Gastrocnemius medialis (tissue), 4 donors: ENCODE measurements at regions of chr11 and their contacts with region 1.

Region 1: GRCh38 chr11:68257475-68258362 is 14.1 kb downstream of the C11orf24 start:
- DNase-seq: peak; percentile 88 to 93
- ATAC-seq: peak; percentile 82 to 86
- H3K4me3 ChIP-seq: peak overlapping the region in 3 of 4 donors; percentile 8 to 41 (median 15)
- H3K27ac ChIP-seq: no peak overlapping the region
- H3K4me1 ChIP-seq: peaks cover 4 to 9% of the 10 kb centered on the region in 2 donors
- H3K27me3 ChIP-seq: no peaks in the 10 kb centered on the region
- CTCF ChIP-seq: peak; percentile 84 to 93 (median 91)
- POLR2A ChIP-seq: no peak

Region 2: DNA sequence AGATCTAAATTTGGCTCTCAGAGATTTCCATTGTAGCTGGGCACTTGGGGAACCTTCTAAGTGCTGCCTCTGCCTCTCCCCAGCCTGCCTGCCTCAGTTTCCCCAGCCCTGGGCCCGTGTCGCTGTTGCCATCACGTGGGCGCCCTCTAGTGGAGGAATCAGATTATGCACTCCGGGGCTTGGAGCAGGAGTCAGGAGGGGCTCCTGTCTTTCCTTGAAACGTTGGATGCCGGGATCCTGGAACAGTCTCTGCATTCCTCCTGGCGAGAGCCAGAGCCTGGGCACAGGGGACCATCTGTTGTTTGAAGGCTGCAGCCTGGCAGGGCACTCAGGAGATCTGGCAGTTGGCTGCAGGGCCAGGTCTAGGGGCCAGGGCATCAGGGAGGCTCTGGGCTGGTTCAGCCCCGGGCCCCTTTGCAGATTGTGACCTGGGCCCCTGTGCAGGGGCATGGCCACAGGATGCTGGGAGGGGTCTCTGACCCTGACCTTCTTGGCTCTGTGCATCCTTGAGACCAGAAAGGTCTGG is 126.3 kb after region 1 on chr11:
- in situ Hi-C with region 1: loop called in 1 of 4 experiments (anchors 5 kb)
- intact Hi-C with region 1: loop called (anchors 5 kb)
- DNase-seq: peak in 1 of 2 donors; percentile 45
- ATAC-seq: peak in 1 of 2 donors; percentile 58
- H3K4me3 ChIP-seq: no peak overlapping the region
- H3K27ac ChIP-seq: no peak overlapping the region
- H3K4me1 ChIP-seq: peaks cover 23 to 25% of the 10 kb centered on the region in 2 donors
- H3K27me3 ChIP-seq: no peaks in the 10 kb centered on the region
- CTCF ChIP-seq: peak; percentile 85 to 94 (median 90)
- POLR2A ChIP-seq: no peak

Region 3: DNA sequence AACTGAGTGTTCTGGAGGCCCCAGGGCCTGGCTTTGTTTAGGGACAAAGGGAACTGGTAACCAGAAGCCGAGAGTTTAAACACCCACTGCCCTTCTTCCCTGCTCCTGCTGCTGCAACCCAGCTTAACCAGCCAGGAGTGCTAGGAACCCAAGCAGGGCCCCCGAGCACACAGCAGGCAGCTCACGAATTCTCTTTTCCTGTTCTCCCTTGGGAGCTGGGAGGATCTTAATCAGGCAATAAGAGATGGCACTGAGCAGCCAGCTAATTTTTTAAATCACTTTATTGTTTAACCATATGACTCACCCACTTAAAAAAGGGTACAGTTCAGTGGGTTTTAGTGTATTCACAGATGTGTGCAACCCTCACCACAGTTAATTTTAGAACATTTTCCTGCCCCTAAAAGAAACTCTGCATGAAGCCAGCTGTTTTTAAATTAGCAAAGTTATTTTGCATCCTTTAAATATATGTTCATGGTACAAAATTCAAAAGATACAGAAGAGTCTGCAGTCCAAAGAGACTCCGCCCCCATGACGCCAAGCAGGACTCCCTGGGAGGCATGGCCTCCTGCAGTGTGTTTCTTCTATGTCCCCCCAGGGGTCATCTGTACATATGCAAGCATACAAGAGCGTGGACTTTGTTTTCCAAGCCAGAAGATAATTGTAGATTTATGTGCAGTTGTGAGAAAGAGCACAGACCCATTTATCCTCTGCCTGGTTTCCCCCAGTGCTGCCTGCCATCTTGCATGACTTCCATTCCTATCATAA is 183.9 kb after region 1 on chr11:
- in situ Hi-C with region 1: loop called in 1 of 4 experiments (anchors 5 kb)
- intact Hi-C with region 1: no loop called
- DNase-seq: no peak
- ATAC-seq: no peak
- H3K4me3 ChIP-seq: no peak overlapping the region
- H3K27ac ChIP-seq: no peak overlapping the region
- H3K4me1 ChIP-seq: no peaks in the 10 kb centered on the region
- H3K27me3 ChIP-seq: no peaks in the 10 kb centered on the region
- CTCF ChIP-seq: no peak
- POLR2A ChIP-seq: no peak

Region 4: DNA sequence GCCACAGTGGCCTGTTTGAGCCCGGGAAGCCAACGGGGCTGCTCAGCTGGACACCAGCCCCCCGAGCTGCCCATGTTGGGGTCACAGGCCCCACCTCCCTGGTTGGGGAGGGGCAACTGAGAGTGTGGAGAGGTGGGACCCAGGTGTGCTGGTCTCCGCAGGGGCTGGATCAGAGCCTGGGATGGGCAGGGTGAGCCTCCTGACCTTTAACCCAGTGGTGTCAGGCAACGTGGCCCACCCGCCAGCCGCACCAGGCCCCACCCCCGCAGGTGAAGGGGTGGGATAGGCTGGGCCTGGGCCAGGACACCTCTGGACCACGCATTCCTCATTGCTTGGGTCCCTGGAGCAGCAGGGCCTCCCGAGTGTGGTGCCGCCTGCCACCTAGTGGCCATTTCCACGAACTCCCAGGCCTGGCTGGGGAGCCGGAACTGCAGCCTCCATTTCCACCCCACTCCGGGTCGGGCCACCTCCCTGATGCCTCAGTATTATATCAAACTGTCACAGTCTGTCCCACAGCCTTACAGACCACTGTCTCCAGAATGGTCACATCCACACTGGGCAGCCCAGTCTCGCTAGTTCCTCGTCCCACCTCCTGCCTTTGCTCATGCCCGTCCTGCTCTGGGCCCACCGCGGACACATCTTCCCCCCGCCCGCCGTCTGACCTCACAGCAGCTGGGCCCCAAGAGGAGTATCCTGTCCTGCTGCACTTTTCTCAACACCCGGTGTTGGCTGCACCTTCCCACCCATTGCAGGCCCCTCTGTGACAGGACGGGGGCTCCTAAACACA is 189.5 kb after region 1 on chr11:
- in situ Hi-C with region 1: loop called in 2 of 4 experiments (anchors 5 kb)
- intact Hi-C with region 1: loop called (anchors 1 kb)
- DNase-seq: peak; percentile 51 to 62
- ATAC-seq: peak; percentile 86 to 87
- H3K4me3 ChIP-seq: no peak overlapping the region
- H3K27ac ChIP-seq: no peak overlapping the region
- H3K4me1 ChIP-seq: no peaks in the 10 kb centered on the region
- H3K27me3 ChIP-seq: no peaks in the 10 kb centered on the region
- CTCF ChIP-seq: peak; percentile 80 to 96 (median 95)
- POLR2A ChIP-seq: no peak

Region 5: DNA sequence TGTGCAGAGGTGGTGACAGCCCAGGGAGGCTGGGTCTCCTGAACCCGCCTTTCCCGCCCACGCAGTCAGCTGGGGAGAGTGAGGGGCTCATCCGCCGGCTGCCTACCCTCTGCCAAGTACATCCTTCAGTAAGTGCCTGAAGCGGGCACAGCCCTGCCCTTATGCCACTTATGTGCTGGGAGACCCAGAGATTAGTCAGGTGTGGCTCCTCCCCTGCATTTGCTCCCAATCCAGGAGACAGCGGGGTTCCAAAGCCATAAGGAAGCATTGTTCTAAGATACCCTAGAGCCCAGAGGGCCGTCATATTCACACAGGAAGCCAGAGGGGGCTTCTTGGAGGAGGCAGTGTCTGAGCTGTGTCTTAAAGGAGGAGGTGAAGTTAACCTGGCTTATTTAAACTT is 197.0 kb after region 1 on chr11:
- in situ Hi-C with region 1: loop called in 1 of 4 experiments (anchors 5 kb)
- intact Hi-C with region 1: no loop called
- DNase-seq: no peak
- ATAC-seq: no peak
- H3K4me3 ChIP-seq: no peak overlapping the region
- H3K27ac ChIP-seq: no peak overlapping the region
- H3K4me1 ChIP-seq: no peaks in the 10 kb centered on the region
- H3K27me3 ChIP-seq: no peaks in the 10 kb centered on the region
- CTCF ChIP-seq: no peak
- POLR2A ChIP-seq: no peak